ENCODE measurements at regions of chr18 and their contacts with region 1.

Region 1: DNA sequence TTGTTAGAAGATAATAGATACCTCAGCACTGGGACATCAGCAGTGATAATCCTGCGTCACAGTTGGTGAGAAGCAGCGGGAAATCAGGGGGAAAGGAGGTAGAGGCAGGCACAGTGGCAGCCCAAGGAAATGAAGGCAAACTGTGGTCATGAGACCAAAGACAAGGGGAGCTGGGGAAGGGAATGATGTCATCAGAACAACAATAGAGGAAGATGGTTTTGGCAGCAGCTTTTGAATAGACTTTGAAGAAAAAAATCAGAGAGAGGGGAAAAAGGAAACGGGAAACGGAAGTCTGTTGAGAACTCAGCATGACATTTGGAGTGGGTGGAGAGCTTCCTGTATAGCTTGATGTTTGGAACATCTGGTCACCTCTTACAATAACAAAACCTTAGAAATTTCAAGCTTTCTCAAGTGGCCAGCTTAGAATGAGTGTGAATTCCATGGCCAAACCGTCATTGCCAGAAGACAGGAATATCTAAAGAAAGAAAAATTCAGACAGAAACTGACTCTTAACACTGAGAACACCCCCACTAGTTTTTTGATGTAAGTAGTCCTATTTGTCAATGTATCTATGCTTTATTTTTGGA is 18.4 kb upstream of the YES1 start:
- DNase-seq: no peak
- ATAC-seq: peak; percentile 62 to 79

Region 2: GRCh38 chr18:725646-726045 is 104.8 kb before region 1 on chr18:
- intact Hi-C with region 1: no loop called
- DNase-seq: no peak
- ATAC-seq: no peak

Region 3: DNA sequence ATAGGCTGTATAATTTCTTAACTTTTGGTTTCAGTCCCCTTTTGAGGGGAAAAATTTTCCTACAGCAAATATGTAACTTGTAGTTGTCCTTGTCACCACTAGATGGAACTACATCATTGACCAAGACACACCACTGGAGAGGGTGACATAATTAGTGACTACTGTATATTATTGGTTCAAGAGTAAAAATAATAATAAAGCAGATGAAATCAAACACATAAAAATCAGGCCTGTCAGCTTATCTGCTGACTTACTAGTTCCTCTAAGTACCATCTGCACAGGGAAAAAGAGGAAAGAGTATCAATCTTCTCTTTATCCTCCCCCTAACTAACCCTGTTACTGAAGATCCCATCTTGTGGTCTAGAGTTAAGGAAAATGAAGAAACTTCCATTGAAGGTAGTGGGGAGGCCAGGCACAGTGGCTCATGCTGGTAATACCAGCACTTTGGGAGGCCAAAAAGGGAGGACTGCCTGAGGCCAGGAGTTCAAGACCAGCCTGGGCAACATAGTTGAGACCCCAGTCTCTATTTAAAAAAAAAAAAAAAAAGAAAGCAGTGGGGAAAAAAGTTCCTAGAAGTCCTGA is 88.4 kb before region 1 on chr18:
- intact Hi-C with region 1: loop called (anchors 1 to 5 kb)
- DNase-seq: no peak
- ATAC-seq: peak; percentile 65 to 75

Measured in left cardiac atrium (tissue), 4 donors.